Activated naive CD4-positive, alpha-beta T cell treated with anti-CD3 and anti-CD28 coated beads for 36 hours (primary cell): ENCODE measurements at regions of chr2 and their contacts with region 1.

Region 1: DNA sequence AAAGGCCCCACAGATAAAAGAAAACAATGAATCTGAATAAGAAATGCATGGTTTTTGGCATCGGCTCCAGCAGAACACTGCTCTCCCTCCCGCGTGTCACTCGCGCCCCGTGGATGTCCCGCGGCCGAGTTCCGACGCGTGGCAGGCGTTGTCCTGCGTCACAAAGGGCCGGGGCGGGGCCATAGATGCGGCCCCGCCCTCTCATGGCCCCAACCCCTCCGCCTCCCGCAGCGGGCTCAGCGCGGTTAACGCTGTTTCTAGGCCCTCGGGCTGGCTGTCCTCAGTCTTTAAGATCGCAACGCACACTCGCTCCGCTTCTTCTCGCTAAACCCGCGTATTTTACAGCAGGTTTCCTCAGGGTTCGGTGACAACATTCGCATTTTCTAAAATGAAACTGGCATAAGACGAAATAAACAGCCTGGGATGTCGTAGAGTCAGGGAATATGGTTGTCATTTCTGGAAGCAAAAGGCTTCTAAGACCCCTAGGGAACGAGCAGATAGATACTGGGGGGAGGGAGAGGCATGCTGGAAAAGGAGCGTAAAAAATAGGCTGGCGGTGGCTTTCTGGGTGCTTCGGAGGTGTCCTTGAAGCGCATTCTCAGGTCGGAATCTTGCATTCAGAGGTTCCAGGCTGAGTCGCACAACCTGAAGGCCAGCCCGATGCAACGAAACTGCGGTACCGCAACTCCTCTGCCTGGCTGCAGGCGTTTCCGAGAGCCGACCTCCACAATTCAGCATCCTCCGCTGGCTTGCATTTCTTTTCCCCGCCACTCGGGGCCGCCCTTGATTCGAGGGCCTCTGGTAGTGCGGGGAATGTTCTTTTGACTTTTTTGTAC is at the start of gene FKBP7:
- DNase-seq: peak; percentile 81
- H3K4me3 Mint-ChIP-seq: peak within 1 kb of the TSS; percentile 96
- H3K27ac Mint-ChIP-seq: peak within 1 kb of the TSS; percentile 95
- H3K4me1 Mint-ChIP-seq: peaks cover 41% of the 10 kb centered on the region
- H3K27me3 Mint-ChIP-seq: no peaks in the 10 kb centered on the region
- total RNA-seq, gene FKBP7: 2.2 to 3.1 TPM

Region 2: DNA sequence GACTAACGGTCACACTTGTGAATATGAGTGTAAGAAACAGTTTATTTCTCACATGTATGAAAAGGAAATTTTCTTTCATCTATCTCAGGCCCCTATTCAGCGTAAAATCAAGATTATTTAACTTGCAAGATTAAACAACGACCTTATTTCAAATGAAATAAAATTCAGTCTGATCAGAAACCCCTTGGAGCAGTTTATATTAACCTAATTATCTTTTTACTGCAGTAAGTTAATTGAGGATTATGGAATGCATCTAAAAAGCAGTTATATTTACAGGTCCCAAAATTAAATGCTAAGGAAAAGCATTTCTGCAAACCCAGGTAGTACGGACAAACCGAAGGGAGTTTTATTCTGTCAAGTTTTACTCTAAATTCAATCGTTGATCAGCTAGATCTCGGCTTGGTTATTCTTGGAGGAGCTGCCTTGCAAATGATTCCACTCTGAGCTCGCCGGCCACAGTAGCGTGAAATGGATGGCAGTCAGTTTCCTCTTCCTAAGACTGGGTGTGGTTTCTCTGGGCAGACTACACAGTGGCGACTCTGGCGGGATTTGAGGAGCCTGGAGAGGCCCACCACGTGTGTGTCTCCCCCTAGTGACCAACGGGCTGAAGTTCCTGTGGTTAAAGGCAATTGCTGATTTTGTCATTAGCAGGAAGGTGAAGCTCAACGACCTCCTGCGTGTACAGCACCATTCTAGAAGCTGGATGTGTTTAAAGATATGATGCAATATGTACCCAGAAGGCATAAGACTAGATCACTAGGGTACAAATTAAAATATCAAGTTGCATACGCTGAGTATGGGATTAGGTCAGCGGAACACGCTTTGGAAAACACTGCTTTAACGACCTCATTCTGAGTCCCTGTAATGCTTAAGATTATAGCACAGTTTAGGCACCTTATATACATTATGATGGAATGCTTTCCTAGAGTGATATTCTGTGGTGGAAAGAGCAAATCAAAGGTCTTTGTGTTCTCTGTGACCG is 64.1 kb before region 1 on chr2:
- CTCF ChIA-PET with region 1: interaction called, 4 read pairs
- intact Hi-C with region 1: loop called (anchors 1 kb)
- DNase-seq: peak; percentile 93
- H3K4me3 Mint-ChIP-seq: peak overlapping the region; percentile 79
- H3K27ac Mint-ChIP-seq: peak overlapping the region; percentile 90
- H3K4me1 Mint-ChIP-seq: peaks cover 12% of the 10 kb centered on the region
- H3K27me3 Mint-ChIP-seq: no peaks in the 10 kb centered on the region

Region 3: GRCh38 chr2:178514664-178515063 is 36.0 kb after region 1 on chr2:
- CTCF ChIA-PET with region 1: no interaction called
- intact Hi-C with region 1: loop called (anchors 1 kb)
- DNase-seq: peak; percentile 69
- H3K4me3 Mint-ChIP-seq: no peak overlapping the region
- H3K27ac Mint-ChIP-seq: peak overlapping the region; percentile 65
- H3K4me1 Mint-ChIP-seq: peaks cover 25% of the 10 kb centered on the region
- H3K27me3 Mint-ChIP-seq: no peaks in the 10 kb centered on the region

Region 4: GRCh38 chr2:178530625-178531142 is 52.0 kb after region 1 on chr2:
- CTCF ChIA-PET with region 1: no interaction called
- intact Hi-C with region 1: loop called (anchors 2 kb)
- DNase-seq: peak; percentile 66
- H3K4me3 Mint-ChIP-seq: no peak overlapping the region
- H3K27ac Mint-ChIP-seq: peak overlapping the region; percentile 15
- H3K4me1 Mint-ChIP-seq: peaks cover 46% of the 10 kb centered on the region
- H3K27me3 Mint-ChIP-seq: no peaks in the 10 kb centered on the region

Region 5: DNA sequence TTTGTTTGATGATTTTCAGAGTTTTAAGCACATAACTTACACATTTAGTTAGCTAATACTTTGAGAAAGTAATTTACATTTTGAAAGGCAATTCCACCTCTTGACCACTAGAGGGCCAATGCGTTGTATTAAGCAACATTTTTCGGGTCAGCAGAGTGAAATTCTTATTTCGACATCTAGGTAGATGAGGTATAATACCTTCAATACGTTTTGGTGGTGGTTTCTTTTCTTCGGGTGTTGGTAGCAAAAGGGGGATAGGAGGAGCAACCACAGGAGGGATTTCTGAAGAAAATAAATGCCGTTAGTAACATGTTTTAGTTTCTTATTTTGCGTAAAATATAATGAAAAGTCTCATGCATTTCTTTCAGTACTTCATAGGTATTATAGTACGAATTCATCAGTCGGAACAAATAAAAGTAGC is 222.3 kb after region 1 on chr2:
- CTCF ChIA-PET with region 1: no interaction called
- intact Hi-C with region 1: loop called (anchors 2 kb)
- DNase-seq: no peak
- H3K4me3 Mint-ChIP-seq: no peak overlapping the region
- H3K27ac Mint-ChIP-seq: no peak overlapping the region
- H3K4me1 Mint-ChIP-seq: peaks cover 2% of the 10 kb centered on the region
- H3K27me3 Mint-ChIP-seq: no peaks in the 10 kb centered on the region

Region 6: DNA sequence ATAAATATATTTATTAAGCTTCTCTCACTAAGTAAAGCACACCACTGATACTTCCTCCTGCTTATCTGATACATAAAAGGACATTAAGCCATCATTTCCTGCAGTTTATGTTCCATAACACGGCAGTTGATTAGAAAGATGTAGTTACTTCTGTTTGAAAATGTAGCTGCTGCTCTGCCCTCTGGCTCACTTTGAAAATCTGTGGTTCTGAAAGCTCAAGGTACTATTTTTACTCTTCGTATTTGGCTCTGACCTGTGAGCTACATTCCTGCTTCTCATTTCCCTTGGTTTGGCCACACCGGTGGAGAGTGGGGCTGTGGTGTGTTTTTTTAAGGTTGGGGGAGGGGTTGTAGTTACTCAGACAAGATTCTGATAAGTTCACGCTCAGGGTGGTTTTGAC is 341.3 kb after region 1 on chr2:
- CTCF ChIA-PET with region 1: no interaction called
- intact Hi-C with region 1: no loop called
- DNase-seq: peak; percentile 7
- H3K4me3 Mint-ChIP-seq: peak overlapping the region; percentile 5
- H3K27ac Mint-ChIP-seq: peak overlapping the region; percentile 32
- H3K4me1 Mint-ChIP-seq: peaks cover 6% of the 10 kb centered on the region
- H3K27me3 Mint-ChIP-seq: no peaks in the 10 kb centered on the region

Region 7: DNA sequence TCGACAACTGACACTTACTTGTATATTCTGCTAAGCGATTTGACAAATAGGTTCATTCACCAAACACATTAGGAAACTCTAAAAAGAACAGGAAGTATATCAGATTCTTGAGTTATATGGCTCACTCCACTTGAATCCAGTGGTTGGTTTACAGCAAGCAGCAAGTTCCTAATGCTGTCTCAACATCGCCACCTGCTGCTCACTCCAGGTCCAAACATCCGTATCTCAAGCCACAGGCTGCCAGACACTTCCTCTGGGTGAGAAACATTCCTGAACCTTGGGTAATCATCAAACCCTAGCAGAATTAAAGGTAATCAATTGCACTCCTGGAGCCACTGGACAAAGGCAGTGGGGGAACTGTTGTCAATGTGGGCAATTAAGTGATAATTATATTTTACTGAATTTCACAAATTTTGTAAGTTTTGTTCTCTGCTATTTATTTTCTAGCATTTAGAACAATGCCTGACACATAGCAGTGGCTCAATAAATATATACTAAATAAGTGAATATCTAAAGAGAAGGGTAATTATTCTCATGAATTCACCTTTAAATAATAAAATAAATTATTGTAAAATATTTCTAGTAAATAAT is 435.7 kb after region 1 on chr2:
- CTCF ChIA-PET with region 1: no interaction called
- intact Hi-C with region 1: loop called (anchors 2 kb)
- DNase-seq: peak; percentile 89
- H3K4me3 Mint-ChIP-seq: no peak overlapping the region
- H3K27ac Mint-ChIP-seq: no peak overlapping the region
- H3K4me1 Mint-ChIP-seq: peaks cover 7% of the 10 kb centered on the region
- H3K27me3 Mint-ChIP-seq: no peaks in the 10 kb centered on the region